Activated naive CD4-positive, alpha-beta T cell treated with anti-CD3 and anti-CD28 coated beads for 36 hours (primary cell): ENCODE measurements at regions of chr1 and their contacts with region 1.

Region 1: GRCh38 chr1:91924146-91924545 is 25.1 kb upstream of the BRDT start:
- DNase-seq: no peak
- H3K4me3 Mint-ChIP-seq: no peak overlapping the region
- H3K27ac Mint-ChIP-seq: no peak overlapping the region
- H3K4me1 Mint-ChIP-seq: peaks cover 5% of the 10 kb centered on the region
- H3K27me3 Mint-ChIP-seq: no peaks in the 10 kb centered on the region

Region 2: DNA sequence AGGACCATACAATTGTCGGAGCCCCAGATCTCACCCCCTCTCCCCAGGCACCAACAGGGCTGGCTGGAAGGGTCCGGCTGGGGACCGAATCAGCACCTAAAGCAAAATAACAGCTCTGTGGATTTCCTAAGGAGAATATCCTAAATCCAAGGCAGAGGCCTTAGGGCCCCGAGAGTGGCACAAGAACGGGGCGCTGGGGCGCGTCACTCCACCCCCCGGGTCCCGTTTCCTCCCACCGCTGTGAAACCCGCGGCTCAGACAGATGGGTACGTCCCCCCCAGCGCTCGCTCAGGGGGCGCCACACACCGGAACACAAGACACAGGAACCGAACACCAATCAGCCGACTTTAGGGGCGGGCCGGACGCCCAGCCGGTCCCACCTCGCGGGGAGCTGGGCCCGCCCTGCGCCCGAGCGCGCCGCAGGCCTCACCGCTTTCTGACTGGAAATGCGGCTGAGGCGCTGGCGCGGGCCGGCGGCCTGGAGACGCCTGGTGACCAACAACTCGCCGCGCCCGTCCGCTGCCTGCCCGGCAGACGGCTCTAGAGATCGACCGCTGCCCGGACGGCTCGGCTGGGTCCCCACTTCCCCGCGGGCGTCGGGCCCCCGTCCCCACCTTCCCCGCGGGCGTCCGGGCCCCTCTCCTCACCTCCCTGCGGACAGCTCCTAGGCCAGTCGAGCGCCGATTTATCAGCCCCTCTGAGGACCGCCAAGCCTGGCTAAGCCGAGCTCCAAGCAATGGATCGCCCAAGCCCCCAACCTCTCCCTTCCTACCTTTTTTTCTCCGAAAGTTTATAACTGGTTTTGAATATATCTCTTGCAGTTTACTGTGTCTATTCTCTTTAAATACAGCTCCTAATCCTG is 519.8 kb before region 1 on chr1 and contains the start of gene HFM1:
- CTCF ChIA-PET with region 1: interaction called, 3 read pairs
- intact Hi-C with region 1: loop called (anchors 1 kb)
- DNase-seq: peak; percentile 63
- H3K4me3 Mint-ChIP-seq: peak within 1 kb of the TSS; percentile 72
- H3K27ac Mint-ChIP-seq: no peak within 1 kb of the TSS
- H3K4me1 Mint-ChIP-seq: peaks cover 2% of the 10 kb centered on the region
- H3K27me3 Mint-ChIP-seq: peaks cover 42% of the 10 kb centered on the region
- total RNA-seq, gene HFM1: not detected

Region 3: GRCh38 chr1:91511386-91511785 is 412.8 kb before region 1 on chr1:
- CTCF ChIA-PET with region 1: interaction called, 24 read pairs
- intact Hi-C with region 1: loop called (anchors 1 kb)
- DNase-seq: no peak
- H3K4me3 Mint-ChIP-seq: no peak overlapping the region
- H3K27ac Mint-ChIP-seq: no peak overlapping the region
- H3K4me1 Mint-ChIP-seq: no peaks in the 10 kb centered on the region
- H3K27me3 Mint-ChIP-seq: no peaks in the 10 kb centered on the region

Region 4: GRCh38 chr1:91617285-91617765 is 306.8 kb before region 1 on chr1:
- CTCF ChIA-PET with region 1: interaction called, 3 read pairs
- intact Hi-C with region 1: loop called (anchors 2 kb)
- DNase-seq: peak; percentile 51
- H3K4me3 Mint-ChIP-seq: no peak overlapping the region
- H3K27ac Mint-ChIP-seq: no peak overlapping the region
- H3K4me1 Mint-ChIP-seq: peaks cover 2% of the 10 kb centered on the region
- H3K27me3 Mint-ChIP-seq: no peaks in the 10 kb centered on the region

Region 5: DNA sequence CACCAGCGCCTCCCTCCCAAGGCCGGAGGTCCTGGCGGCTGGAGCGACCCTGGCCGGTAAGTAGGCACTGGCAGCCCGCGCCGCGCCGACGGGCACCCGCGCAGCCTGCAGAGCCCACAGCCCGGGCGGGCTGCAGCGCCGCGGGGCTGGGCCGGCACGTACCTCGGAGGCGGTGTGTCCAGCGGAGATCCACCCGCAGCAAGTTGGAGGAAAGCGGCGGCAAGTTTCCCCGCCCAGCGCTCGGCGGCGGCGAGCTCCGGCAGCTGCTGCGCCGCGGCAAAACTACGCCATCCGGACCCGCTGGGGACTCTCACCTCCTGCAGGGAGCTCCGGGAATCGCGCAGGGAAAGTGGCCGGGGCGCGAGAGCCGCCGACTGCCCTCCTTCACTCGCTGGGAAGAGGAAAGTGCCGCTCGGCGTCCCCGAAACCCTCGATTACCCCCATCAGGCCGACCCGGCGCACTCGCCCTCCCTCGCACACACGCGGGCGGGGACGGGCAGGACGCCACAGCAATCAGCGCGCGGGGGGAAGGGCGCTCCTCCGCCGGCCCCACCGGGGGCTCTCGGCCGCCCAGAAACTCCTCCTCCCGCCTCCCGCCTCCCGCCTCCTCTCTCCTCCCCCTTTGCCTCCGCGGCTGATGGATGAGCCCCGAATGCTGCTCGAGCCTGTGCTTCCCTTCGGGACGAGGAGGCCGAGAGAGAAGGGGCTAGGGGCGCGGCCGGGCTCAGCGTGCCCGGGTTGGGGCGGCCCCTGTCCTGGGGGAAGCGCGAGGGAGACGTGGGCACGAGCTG is 38.2 kb before region 1 on chr1 and contains the start of gene TGFBR3:
- CTCF ChIA-PET with region 1: interaction called, 9 read pairs
- intact Hi-C with region 1: loop called (anchors 2 kb)
- DNase-seq: peak; percentile 74
- H3K4me3 Mint-ChIP-seq: peak within 1 kb of the TSS; percentile 85
- H3K27ac Mint-ChIP-seq: peak within 1 kb of the TSS; percentile 46
- H3K4me1 Mint-ChIP-seq: peaks cover 33% of the 10 kb centered on the region
- H3K27me3 Mint-ChIP-seq: peaks cover 15% of the 10 kb centered on the region
- total RNA-seq, gene TGFBR3: 3.2 to 3.3 TPM

Region 6: GRCh38 chr1:91981996-91982609 is 58.0 kb after region 1 on chr1:
- CTCF ChIA-PET with region 1: no interaction called
- intact Hi-C with region 1: no loop called
- DNase-seq: no peak
- H3K4me3 Mint-ChIP-seq: no peak overlapping the region
- H3K27ac Mint-ChIP-seq: no peak overlapping the region
- H3K4me1 Mint-ChIP-seq: no peaks in the 10 kb centered on the region
- H3K27me3 Mint-ChIP-seq: peaks cover 2% of the 10 kb centered on the region

Region 7: DNA sequence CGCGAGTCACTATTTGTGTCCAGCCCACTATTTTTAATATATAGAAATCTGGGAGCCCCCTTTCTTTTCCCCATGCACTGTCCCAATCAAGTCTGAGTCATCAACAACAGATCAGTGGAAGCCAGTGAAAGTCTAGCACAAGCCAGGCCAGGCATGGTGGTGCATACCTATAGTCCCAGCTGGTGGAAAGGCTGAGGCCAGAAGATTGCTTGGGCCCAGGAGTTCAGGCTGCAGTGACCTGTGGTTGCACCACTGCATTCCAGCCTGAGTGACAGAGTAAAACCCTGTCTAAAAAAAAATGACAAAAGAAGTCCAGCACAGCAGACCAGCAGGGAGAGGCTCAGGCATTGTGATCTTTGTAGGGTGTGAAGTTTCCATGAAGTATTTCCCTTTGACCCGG is 898.7 kb after region 1 on chr1:
- CTCF ChIA-PET with region 1: no interaction called
- intact Hi-C with region 1: no loop called
- DNase-seq: no peak
- H3K4me3 Mint-ChIP-seq: no peak overlapping the region
- H3K27ac Mint-ChIP-seq: no peak overlapping the region
- H3K4me1 Mint-ChIP-seq: no peaks in the 10 kb centered on the region
- H3K27me3 Mint-ChIP-seq: no peaks in the 10 kb centered on the region